Dendritic cell treated with granulocyte-macrophage colony-stimulating factor and Interleukin-4, amounts not matched to agents 40 ng/mL and 50 ng/mL, for 4 days (primary cell): ENCODE measurements at regions of chr13 and their contacts with region 1.

Region 1: DNA sequence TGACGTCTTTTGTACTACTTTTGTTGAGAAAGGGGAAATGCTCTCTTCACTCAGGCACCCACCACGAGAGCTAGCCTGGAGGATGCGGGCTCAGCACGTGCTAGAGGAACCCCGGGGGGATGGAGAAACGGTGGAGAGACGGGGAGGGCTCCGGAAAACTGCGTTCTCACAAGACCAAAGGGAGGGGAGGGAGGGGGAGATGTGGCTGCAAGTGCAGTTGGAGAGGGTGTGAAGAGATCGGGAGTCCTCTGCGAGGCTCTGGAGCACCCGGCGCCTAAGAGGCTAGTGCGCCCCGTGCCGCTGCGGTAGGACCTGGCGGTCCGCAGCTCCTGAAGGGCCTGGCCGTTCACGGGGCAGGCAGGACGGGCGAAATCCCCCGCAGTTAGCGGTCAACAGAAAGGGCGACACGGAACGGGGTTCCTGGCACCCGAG is 43.4 kb upstream of the XPO4 start:
- H3K4me3 Mint-ChIP-seq: peak overlapping the region; percentile 53
- H3K27ac Mint-ChIP-seq: peak overlapping the region; percentile 21
- H3K4me1 Mint-ChIP-seq: peaks cover 20% of the 10 kb centered on the region
- H3K27me3 Mint-ChIP-seq: peaks cover 19% of the 10 kb centered on the region

Region 2: DNA sequence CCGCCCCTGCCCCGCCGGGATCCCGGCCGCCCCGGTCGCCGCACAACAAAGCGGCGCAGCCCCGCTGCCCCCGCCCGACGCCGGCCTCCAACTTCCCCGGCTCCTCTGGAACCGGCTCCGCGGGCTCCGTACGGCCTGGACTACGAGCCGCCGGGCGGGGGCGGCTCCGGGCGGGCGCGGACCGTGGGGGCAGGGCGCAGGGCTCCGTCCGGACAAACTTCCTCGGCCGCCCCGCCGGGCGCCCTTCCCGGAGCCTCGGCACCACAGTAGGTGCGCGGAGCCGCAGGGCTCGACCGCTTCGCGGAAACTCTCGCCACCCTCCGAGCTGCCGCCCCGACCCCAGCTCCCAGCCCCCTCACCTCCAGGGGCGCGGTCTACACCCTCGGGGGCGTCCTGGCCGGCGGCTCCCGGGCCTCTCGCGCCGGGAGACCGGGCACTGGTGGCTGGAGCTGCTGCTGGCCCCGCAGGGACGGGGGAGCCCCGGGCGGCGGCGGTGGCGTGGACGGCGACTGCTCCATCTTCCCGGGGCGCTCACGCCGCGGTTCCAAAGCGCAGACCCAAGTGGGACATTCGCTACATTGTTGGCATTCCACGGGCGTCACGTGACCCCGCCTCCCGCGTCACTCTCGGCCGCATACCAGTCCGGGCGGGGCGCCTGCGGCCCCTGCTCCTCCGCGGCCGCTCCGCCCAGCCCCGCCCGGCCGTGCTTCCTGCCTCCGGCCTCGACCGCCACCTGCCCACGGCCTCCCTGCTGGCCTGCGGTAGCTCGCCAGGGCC is 115.2 kb after region 1 on chr13 and contains the start of gene LATS2:
- intact Hi-C with region 1: loop called (anchors 10 kb)
- H3K4me3 Mint-ChIP-seq: peak within 1 kb of the TSS; percentile 79
- H3K27ac Mint-ChIP-seq: peak within 1 kb of the TSS; percentile 84
- H3K4me1 Mint-ChIP-seq: peaks cover 48% of the 10 kb centered on the region
- H3K27me3 Mint-ChIP-seq: no peaks in the 10 kb centered on the region

Region 3: DNA sequence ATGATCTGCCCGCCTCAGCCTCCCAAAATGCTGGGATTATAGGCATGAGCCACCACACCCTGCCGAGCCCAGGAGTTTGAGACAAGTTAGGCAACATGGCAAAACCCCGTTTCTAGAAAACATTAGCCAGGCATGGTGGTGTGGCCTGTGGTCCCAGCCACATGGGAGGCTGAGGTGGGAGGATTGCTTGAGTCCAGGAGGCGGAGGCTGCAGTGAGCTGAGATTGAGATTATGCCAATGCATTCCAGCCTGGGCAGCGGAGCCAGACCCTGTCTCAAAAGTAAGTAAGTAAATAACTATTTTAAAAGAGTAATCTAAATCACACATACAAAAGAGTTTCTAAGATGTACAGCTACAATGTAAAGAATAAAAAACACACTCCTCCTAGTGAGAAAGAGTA is 188.5 kb after region 1 on chr13:
- intact Hi-C with region 1: loop called (anchors 2 kb)
- H3K4me3 Mint-ChIP-seq: no peak overlapping the region
- H3K27ac Mint-ChIP-seq: no peak overlapping the region
- H3K4me1 Mint-ChIP-seq: peaks cover under 1% of the 10 kb centered on the region
- H3K27me3 Mint-ChIP-seq: no peaks in the 10 kb centered on the region

Region 4: GRCh38 chr13:21176220-21176982 is 230.4 kb after region 1 on chr13 and contains the starts of genes MRPL57 and SKA3:
- intact Hi-C with region 1: loop called (anchors 1 kb)
- H3K4me3 Mint-ChIP-seq: peak within 1 kb of the TSS; percentile 98
- H3K27ac Mint-ChIP-seq: peak within 1 kb of the TSS; percentile 96
- H3K4me1 Mint-ChIP-seq: peaks cover 11% of the 10 kb centered on the region
- H3K27me3 Mint-ChIP-seq: no peaks in the 10 kb centered on the region